ENCODE measurements at regions of chr2 and their contacts with region 1.

Region 1: GRCh38 chr2:181715033-181715630 is 34.8 kb upstream of the NEUROD1 start:
- DNase-seq: peak in 2 of 3 donors; percentile 42 to 64
- ATAC-seq: peak; percentile 90 to 95 (median 94)
- H3K4me3 ChIP-seq: no peak overlapping the region
- H3K27ac ChIP-seq: no peak overlapping the region
- H3K4me1 ChIP-seq: no peaks in the 10 kb centered on the region
- H3K27me3 ChIP-seq: no peaks in the 10 kb centered on the region
- CTCF ChIP-seq: peak; percentile 59 to 78 (median 70)
- POLR2A ChIP-seq: no peak

Region 2: GRCh38 chr2:181573140-181573736 is 141.9 kb before region 1 on chr2:
- intact Hi-C with region 1: loop called (anchors 5 to 10 kb)
- DNase-seq: no peak
- ATAC-seq: peak in 3 of 4 donors; percentile 49 to 71 (median 67)
- H3K4me3 ChIP-seq: no peak overlapping the region
- H3K27ac ChIP-seq: no peak overlapping the region
- H3K4me1 ChIP-seq: peaks cover 0 to 2% (median 0%) of the 10 kb centered on the region in 4 donors
- H3K27me3 ChIP-seq: no peaks in the 10 kb centered on the region
- CTCF ChIP-seq: peak; percentile 46 to 59 (median 52)
- POLR2A ChIP-seq: no peak